Aorta (tissue), 5 donors: ENCODE measurements at regions of chr9 and their contacts with region 1.

Region 1: GRCh38 chr9:27333241-27334052 is 36.5 kb upstream of the EQTN start:
- DNase-seq: peak in 1 of 2 donors; percentile 71
- ATAC-seq: peak; percentile 88
- H3K4me3 ChIP-seq: no peak overlapping the region
- H3K27ac ChIP-seq: no peak overlapping the region
- H3K4me1 ChIP-seq: peaks cover 2 to 4% of the 10 kb centered on the region in 2 donors
- H3K27me3 ChIP-seq: no peaks in the 10 kb centered on the region

Region 2: GRCh38 chr9:26946753-26947727 is 386.4 kb before region 1 on chr9 and contains the start of gene PLAA:
- intact Hi-C with region 1: loop called in 1 of 2 experiments (anchors 5 kb)
- DNase-seq: peak; percentile 93 to 96
- ATAC-seq: peak; percentile 99
- H3K4me3 ChIP-seq: peak within 1 kb of the TSS; percentile 69 to 77
- H3K27ac ChIP-seq: peak within 1 kb of the TSS; percentile 38 to 86
- H3K4me1 ChIP-seq: peaks cover 3 to 4% of the 10 kb centered on the region in 2 donors
- H3K27me3 ChIP-seq: peaks cover 0 to 2% of the 10 kb centered on the region in 2 donors
- total RNA-seq, gene PLAA: 23.5 to 27.2 TPM

Region 3: DNA sequence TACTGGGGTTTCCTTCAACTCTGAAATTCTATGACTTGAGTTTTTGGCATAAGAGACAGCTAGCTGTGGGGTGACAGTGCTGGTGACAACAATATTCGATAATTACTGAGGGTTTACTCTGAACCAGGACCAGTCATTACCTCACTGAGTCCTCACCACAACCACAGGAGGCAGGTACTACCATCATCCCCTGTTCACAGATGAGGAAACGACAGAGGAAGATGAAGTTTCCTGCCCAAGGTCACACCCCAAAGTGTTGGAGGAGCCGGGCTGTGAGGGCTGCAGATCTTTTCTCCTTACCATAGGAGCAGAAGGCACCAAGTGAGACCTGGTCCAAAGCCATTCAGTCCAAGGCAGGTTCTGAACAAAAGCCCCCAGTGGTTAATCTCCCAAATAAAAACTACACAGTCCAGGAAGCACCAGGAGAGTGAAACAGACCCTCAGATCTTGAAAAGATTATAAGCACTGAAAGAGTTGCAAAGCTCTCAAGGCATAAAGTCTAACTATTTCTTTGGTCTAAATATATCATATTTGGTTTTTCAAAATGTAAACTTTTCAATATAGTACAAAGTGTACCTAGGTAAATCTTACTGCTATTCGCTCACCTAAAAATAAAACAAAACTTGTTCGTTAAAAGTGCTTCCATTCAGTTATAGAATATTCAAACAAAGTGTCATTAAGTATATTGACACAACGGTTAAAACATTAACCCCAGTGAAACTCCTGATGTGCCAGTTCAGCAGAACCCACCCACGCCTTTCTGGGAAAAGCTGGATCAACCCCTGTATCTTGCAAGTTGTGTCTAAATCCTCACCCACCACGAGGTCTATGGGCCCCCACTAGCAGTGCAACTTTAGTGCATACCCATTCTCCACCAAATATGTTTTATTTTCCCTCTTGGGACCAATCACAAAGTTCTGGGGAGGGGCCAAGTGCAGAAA is 46.1 kb after region 1 on chr9:
- intact Hi-C with region 1: loop called in 1 of 2 experiments (anchors 5 kb)
- DNase-seq: no peak
- ATAC-seq: no peak
- H3K4me3 ChIP-seq: no peak overlapping the region
- H3K27ac ChIP-seq: no peak overlapping the region
- H3K4me1 ChIP-seq: peaks cover 0 to 1% of the 10 kb centered on the region in 2 donors
- H3K27me3 ChIP-seq: no peaks in the 10 kb centered on the region

Region 4: GRCh38 chr9:27548055-27548741 is 214.8 kb after region 1 on chr9:
- intact Hi-C with region 1: loop called (anchors 2 kb)
- DNase-seq: no peak
- ATAC-seq: peak; percentile 89
- H3K4me3 ChIP-seq: no peak overlapping the region
- H3K27ac ChIP-seq: no peak overlapping the region
- H3K4me1 ChIP-seq: no peaks in the 10 kb centered on the region
- H3K27me3 ChIP-seq: no peaks in the 10 kb centered on the region